Activated CD8-positive, alpha-beta T cell treated with anti-CD3 and anti-CD28 coated beads, Interleukin-2, amount 10 ng/mL, durations not matched to agents 7 days and 5 days (primary cell): ENCODE measurements at regions of chr1 and their contacts with region 1.

Region 1: DNA sequence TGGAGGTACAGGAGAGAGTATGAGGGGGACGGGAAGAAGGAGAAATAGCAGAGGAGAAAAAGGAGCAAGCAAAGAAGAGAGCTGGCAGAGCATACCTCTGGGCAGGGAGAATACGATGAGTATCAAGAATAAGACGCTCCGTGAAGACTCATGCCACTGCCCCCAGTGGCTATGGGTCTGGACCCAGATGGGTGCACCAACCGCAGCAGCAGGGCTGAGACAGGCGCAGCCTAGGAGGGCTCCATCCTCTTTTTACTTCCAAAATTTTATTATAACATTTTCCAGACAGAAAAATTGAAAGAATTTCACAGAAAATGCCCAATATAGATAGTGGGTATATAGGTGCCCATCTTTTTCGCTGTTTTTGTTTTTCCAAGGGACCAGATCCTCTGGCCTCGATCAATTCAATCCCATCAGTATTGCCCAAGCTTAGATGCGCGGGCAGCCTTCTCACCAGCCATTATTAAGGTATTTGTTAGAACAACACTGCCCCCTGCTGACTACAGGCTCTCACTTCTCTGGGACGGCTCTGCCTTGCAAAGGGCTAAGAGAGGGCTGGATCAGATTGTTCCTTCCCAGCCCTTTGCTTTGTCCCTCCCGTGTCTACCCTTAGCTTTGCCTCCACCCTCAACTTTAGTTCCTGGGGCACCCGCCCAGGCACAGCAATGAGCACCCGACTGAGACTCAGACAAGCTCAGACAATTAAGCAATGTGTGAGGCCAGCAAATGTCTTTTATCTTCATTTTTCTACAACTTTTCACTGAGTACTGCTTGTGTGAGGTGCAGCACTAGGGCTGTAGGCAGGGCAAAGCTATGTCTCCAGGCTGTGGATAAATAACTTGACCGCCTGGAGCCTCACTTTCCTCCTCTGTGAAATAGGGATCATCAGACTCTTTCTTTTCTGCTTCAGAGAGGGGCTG is 17.5 kb upstream of the CAMK1G start:
- DNase-seq: peak; percentile 85
- ATAC-seq: peak; percentile 92
- H3K4me3 Mint-ChIP-seq: no peak overlapping the region
- H3K27ac Mint-ChIP-seq: no peak overlapping the region
- H3K4me1 Mint-ChIP-seq: peaks cover 9% of the 10 kb centered on the region
- H3K27me3 Mint-ChIP-seq: peaks cover 29% of the 10 kb centered on the region

Region 2: DNA sequence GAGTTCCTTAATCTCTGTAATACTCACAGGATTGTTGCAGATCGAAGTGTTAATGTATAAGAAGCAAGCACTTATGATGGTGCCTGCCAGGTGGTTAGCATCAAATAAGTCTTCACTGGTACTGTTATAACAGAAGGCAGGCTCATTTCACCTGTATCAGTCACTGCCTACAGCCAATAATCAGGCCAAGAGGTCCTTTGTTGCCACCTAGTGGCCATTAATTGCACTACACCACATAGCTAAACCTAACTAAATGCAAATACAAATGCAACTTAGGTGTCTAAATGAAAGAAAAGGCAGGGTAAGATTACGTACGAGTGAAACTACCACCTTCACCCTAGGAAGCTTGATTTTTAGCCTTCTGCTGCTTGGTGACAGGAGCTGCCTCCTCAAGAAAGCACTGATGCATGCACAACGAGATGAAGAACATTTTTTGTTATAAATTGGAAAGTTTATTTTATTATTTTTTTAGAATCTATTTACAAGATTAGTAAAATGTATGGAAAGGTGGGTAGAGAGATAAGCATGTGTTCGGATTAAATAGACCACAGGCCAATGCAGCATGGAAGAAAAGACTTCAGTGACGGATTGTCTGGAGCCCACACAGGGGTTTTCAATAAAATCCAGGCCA is 317.3 kb before region 1 on chr1:
- CTCF ChIA-PET with region 1: interaction called, 10 read pairs
- POLR2A ChIA-PET with region 1: no interaction called
- DNase-seq: peak; percentile 65
- ATAC-seq: peak; percentile 55
- H3K4me3 Mint-ChIP-seq: no peak overlapping the region
- H3K27ac Mint-ChIP-seq: no peak overlapping the region
- H3K4me1 Mint-ChIP-seq: no peaks in the 10 kb centered on the region
- H3K27me3 Mint-ChIP-seq: no peaks in the 10 kb centered on the region

Region 3: GRCh38 chr1:209549443-209550205 is 16.4 kb before region 1 on chr1:
- CTCF ChIA-PET with region 1: interaction called, 14 read pairs
- POLR2A ChIA-PET with region 1: no interaction called
- DNase-seq: no peak
- ATAC-seq: no peak
- H3K4me3 Mint-ChIP-seq: no peak overlapping the region
- H3K27ac Mint-ChIP-seq: no peak overlapping the region
- H3K4me1 Mint-ChIP-seq: no peaks in the 10 kb centered on the region
- H3K27me3 Mint-ChIP-seq: peaks cover 16% of the 10 kb centered on the region

Region 4: GRCh38 chr1:209576798-209577197 is 10.8 kb after region 1 on chr1:
- CTCF ChIA-PET with region 1: interaction called, 26 read pairs
- POLR2A ChIA-PET with region 1: no interaction called
- DNase-seq: peak; percentile 71
- ATAC-seq: peak; percentile 92
- H3K4me3 Mint-ChIP-seq: no peak overlapping the region
- H3K27ac Mint-ChIP-seq: no peak overlapping the region
- H3K4me1 Mint-ChIP-seq: no peaks in the 10 kb centered on the region
- H3K27me3 Mint-ChIP-seq: peaks cover 27% of the 10 kb centered on the region

Region 5: GRCh38 chr1:209585672-209586071 is 19.7 kb after region 1 on chr1:
- CTCF ChIA-PET with region 1: interaction called, 15 read pairs
- POLR2A ChIA-PET with region 1: no interaction called
- DNase-seq: no peak
- ATAC-seq: peak; percentile 64
- H3K4me3 Mint-ChIP-seq: no peak overlapping the region
- H3K27ac Mint-ChIP-seq: no peak overlapping the region
- H3K4me1 Mint-ChIP-seq: no peaks in the 10 kb centered on the region
- H3K27me3 Mint-ChIP-seq: peaks cover 19% of the 10 kb centered on the region

Region 6: GRCh38 chr1:209685821-209686220 is 119.8 kb after region 1 on chr1:
- CTCF ChIA-PET with region 1: interaction called, 13 read pairs
- POLR2A ChIA-PET with region 1: no interaction called
- DNase-seq: peak; percentile 53
- ATAC-seq: peak; percentile 69
- H3K4me3 Mint-ChIP-seq: peak overlapping the region; percentile 45
- H3K27ac Mint-ChIP-seq: peak overlapping the region; percentile 43
- H3K4me1 Mint-ChIP-seq: peaks cover 30% of the 10 kb centered on the region
- H3K27me3 Mint-ChIP-seq: peaks cover 23% of the 10 kb centered on the region

Region 7: DNA sequence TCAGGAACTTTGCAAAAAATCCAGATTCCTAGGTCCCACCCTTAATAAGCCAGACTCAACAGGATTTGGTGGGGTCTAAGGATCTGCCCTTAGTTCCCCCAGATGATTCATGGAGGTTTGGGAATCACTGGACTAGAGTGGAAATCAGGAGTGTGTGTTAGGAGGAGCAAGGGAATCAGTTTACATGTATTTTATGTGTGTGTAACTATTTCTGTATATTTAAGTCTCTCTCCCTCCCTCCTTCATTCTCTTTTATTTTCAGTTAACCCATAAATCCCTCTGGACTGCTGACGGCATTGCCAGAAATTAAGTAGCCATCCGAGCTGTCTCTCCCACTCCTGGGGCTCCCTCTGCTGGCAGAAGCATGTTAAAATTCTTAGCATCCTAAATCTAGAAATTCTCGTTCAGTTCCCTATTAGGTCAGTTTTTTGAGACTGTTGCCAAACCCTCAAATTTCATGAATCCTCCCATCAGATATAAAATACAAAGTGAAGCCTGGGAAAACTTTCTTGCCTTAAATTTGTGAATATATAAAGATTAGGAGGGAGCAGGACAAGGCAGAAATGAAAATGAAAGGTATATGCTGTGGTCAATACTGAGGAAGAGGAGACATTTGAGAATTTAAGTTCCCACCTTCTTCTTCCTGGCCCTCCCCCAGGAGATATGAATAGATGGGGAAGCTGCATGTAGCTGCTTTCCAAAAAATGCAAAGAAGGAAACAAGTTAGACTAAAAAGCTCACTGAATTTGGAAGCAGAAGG is 126.9 kb after region 1 on chr1:
- CTCF ChIA-PET with region 1: interaction called, 12 read pairs
- POLR2A ChIA-PET with region 1: no interaction called
- DNase-seq: peak; percentile 81
- ATAC-seq: peak; percentile 68
- H3K4me3 Mint-ChIP-seq: peak overlapping the region; percentile 45
- H3K27ac Mint-ChIP-seq: no peak overlapping the region
- H3K4me1 Mint-ChIP-seq: peaks cover 28% of the 10 kb centered on the region
- H3K27me3 Mint-ChIP-seq: peaks cover 3% of the 10 kb centered on the region